ENCODE measurements at regions of chr6 and their contacts with region 1.

Region 1: GRCh38 chr6:47413752-47414422 is 63.7 kb upstream of the CD2AP start:
- DNase-seq: peak; percentile 28 to 47
- H3K4me3 ChIP-seq: peak overlapping the region; percentile 50; the same call in 1 of the 2 replicates
- H3K27ac ChIP-seq: peak overlapping the region; percentile 57; the same call in 1 of the 2 replicates
- H3K4me1 ChIP-seq: peaks cover 16% of the 10 kb centered on the region
- H3K27me3 ChIP-seq: no peaks in the 10 kb centered on the region
- CTCF ChIP-seq: peak; percentile 90

Region 2: DNA sequence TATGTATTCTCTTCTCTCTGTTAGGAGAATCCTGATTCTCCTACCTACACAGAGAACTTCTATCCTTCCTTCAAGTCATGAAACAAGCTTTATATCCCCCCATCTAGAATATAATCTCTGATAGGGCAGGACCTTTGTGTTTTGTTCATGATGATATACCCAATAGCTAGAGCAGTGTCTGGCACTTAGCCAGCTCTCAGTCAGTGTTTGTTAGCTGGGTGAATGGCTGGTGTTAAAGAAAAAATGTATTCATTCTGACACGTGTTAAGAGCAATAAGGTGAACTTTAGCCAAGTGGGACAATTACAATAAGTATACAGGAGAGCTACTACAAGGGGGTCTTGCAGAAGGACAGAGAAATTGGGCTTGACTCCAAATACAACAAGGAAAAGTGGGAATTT is 69.9 kb before region 1 on chr6:
- CTCF ChIA-PET with region 1: no interaction called
- POLR2A ChIA-PET with region 1: no interaction called
- intact Hi-C with region 1: no loop called
- DNase-seq: peak; percentile 26 to 53
- H3K4me3 ChIP-seq: no peak overlapping the region; the same call in 1 of the 2 replicates
- H3K27ac ChIP-seq: 0 out of 2 replicates have a peak overlapping the region, but pooled peaks have one; percentile 6
- H3K4me1 ChIP-seq: peaks cover 22% of the 10 kb centered on the region
- H3K27me3 ChIP-seq: no peaks in the 10 kb centered on the region
- CTCF ChIP-seq: no peak

Region 3: DNA sequence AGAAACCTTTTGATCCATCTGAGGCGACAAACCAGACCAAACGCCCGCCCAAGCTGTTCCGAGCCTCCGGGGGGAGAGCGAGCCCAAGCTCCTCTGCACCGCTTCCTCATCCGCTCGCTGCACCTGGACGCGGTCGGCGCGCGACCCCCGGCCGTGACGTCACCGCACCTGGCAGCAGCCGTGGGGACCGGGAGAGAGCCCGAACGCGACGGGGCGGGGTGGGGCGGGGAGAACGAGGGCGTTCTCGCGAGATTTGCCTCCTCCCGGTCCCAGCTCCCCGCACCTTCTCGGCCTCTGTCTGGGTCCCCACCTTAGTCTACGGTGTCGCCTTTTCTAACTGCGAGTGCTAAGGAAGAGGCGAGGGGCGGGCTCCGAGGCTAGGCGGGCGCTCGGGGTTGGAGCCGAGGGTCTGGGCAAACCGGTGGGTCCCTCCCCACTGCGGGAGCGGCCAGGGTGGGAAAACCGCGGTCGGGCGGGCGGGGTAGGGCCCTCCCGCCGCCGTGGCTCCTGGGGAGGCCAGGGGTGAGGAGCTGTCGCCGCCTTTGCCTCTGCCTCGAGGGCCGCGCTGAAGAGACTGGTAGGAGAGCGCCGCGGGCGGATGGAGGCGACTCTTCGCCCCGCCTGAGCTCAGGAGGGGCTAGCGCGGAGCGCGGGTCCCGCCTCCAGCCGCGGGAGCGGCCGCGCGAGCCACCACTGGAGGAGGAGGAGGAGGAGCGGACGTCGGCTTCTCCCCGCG is 63.8 kb after region 1 on chr6 and contains the start of gene CD2AP:
- CTCF ChIA-PET with region 1: no interaction called
- POLR2A ChIA-PET with region 1: no interaction called
- intact Hi-C with region 1: loop called (anchors 2 kb)
- DNase-seq: peak; percentile 80 to 85
- H3K4me3 ChIP-seq: peak within 1 kb of the TSS; percentile 95
- H3K27ac ChIP-seq: peak within 1 kb of the TSS; percentile 97
- H3K4me1 ChIP-seq: peaks cover 38% of the 10 kb centered on the region
- H3K27me3 ChIP-seq: no peaks in the 10 kb centered on the region
- CTCF ChIP-seq: no peak; the same call in 1 of the 2 replicates
- total RNA-seq, gene CD2AP: 48.8 and 55.5 TPM in 2 replicates

Region 4: DNA sequence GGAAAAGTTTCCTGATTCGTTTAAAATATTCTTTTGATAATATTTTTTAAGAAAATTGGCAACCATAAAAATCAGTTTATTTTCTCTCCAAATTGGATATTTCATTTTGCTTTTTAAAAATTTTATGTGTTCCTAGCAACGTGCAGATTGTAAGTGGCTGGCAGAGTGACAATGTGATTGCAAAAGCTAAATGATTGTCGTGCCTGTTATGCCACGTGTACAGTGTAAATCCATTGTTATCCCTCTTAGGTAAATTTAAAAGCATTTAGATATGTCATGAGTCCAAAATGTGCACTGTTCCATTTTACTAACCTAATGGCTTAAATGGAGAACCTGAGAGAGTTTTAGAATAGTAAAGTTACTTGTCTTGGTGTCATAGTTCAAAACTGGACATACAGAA is 190.1 kb after region 1 on chr6:
- CTCF ChIA-PET with region 1: no interaction called
- POLR2A ChIA-PET with region 1: no interaction called
- intact Hi-C with region 1: loop called (anchors 5 kb)
- DNase-seq: no peak
- H3K4me3 ChIP-seq: no peak overlapping the region
- H3K27ac ChIP-seq: no peak overlapping the region
- H3K4me1 ChIP-seq: no peaks in the 10 kb centered on the region; the same call in 1 of the 2 replicates
- H3K27me3 ChIP-seq: no peaks in the 10 kb centered on the region
- CTCF ChIP-seq: no peak

Region 5: GRCh38 chr6:47631269-47631772 is 217.4 kb after region 1 on chr6:
- CTCF ChIA-PET with region 1: no interaction called
- POLR2A ChIA-PET with region 1: interaction called, 5 read pairs
- intact Hi-C with region 1: loop called (anchors 2 kb)
- DNase-seq: peak; percentile 18 to 70
- H3K4me3 ChIP-seq: no peak overlapping the region
- H3K27ac ChIP-seq: no peak overlapping the region
- H3K4me1 ChIP-seq: peaks cover 5% of the 10 kb centered on the region
- H3K27me3 ChIP-seq: no peaks in the 10 kb centered on the region
- CTCF ChIP-seq: peak; percentile 89

Region 6: DNA sequence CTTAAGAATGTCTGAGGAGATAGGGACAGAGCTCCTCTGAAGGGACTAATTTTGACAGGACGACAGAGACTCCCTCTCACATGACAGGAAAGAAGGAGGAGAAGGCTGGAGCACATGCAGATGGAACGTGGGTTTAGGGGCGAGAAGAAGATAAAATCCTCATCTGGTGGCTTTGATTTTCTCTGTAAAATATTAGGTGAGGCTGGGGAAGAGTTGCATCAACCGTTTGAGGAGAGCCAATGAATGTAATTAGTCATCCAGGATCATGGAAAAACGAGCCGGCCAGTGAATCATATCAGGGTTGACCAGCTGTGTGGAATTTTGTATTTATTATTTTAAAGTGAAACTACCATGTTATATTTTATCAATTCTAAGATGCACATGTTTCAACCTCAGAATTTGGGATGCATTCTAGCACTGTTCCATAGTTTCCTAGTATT is 237.6 kb after region 1 on chr6:
- CTCF ChIA-PET with region 1: no interaction called
- POLR2A ChIA-PET with region 1: no interaction called
- intact Hi-C with region 1: no loop called
- DNase-seq: peak in 1 of 2 experiments; percentile 52
- H3K4me3 ChIP-seq: no peak overlapping the region
- H3K27ac ChIP-seq: peak overlapping the region; percentile 75
- H3K4me1 ChIP-seq: peaks cover 36% of the 10 kb centered on the region
- H3K27me3 ChIP-seq: no peaks in the 10 kb centered on the region
- CTCF ChIP-seq: no peak

Region 7: DNA sequence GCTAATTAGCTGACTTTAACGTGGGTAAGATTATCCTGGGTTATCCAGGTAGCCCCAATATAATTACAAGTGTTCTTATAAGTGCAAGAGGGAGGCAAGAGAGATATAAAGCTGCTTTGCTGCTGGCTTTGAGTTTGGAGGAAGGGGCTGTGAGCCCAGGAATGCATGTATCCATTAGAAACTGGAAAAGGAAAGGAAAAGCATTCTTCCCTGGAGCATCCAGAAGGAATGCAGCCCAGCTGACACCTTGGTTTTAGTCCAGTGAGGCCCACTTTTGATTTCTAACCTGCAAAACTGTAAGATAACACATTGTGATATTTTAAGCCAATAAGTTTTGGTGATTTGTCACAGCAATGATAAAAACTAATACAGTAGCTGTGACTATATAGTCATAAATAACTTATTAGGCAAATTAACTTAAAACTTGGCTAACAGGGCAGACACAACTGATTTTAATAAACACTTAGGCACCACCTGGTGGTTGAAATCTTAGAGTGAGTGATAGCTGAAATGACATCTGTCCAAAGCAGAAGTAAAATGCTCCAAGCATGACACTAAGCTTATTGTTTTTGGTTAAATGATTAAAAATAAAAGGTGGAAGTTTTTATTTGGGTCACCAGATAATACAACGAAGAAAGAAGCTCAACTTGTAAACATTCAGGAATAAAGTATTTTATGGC is 320.1 kb after region 1 on chr6:
- CTCF ChIA-PET with region 1: no interaction called
- POLR2A ChIA-PET with region 1: no interaction called
- intact Hi-C with region 1: loop called (anchors 1 kb)
- DNase-seq: no peak
- H3K4me3 ChIP-seq: no peak overlapping the region
- H3K27ac ChIP-seq: no peak overlapping the region
- H3K4me1 ChIP-seq: peaks cover 20% of the 10 kb centered on the region
- H3K27me3 ChIP-seq: no peaks in the 10 kb centered on the region
- CTCF ChIP-seq: peak; percentile 74